ENCODE measurements at regions of chr13 and their contacts with region 1.

Region 1: DNA sequence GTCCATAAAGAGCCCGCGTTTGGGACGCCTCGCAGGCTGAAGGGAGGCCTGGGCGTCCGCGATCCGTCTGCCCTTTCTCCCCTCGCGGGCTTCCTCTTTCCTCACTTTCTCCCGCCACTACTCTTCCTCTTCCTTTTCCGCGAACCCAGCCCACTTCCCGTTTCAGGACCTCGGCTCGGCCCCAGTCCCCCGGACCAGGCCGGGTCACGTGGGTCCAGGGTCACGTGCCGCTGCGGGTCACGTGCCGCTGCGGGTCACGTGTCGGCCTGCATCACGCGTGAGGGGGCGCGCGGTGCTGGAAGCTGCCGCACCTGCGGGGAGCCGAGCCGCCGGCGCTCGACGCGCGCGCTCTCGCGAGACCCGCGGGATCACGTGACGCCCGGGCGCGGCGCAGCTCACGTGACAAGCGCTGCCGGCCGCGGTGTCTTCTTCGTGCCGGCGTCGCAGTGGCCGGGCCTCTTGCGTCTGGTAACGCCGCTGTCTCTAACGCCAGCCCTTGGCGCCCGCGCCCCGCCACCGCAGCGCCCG is at the start of gene LAMP1:
- DNase-seq: peak; percentile 94
- H3K4me3 ChIP-seq: peak within 1 kb of the TSS; percentile 83 to 91 (median 91)
- H3K27ac ChIP-seq: peak within 1 kb of the TSS; percentile 78
- H3K4me1 ChIP-seq: peaks cover 3% of the 10 kb centered on the region
- H3K27me3 ChIP-seq: no peaks in the 10 kb centered on the region
- CTCF ChIP-seq: no peak
- total RNA-seq, gene LAMP1: 242 to 252 TPM

Region 2: GRCh38 chr13:112917056-112917664 is 379.7 kb before region 1 on chr13:
- CTCF ChIA-PET with region 1: no interaction called
- dilution Hi-C with region 1: no loop called
- in situ Hi-C with region 1: no loop called
- intact Hi-C with region 1: no loop called
- DNase-seq: no peak
- H3K4me3 ChIP-seq: no peak overlapping the region
- H3K27ac ChIP-seq: no peak overlapping the region
- H3K4me1 ChIP-seq: no peaks in the 10 kb centered on the region
- H3K27me3 ChIP-seq: peaks cover 1% of the 10 kb centered on the region
- CTCF ChIP-seq: no peak

Region 3: DNA sequence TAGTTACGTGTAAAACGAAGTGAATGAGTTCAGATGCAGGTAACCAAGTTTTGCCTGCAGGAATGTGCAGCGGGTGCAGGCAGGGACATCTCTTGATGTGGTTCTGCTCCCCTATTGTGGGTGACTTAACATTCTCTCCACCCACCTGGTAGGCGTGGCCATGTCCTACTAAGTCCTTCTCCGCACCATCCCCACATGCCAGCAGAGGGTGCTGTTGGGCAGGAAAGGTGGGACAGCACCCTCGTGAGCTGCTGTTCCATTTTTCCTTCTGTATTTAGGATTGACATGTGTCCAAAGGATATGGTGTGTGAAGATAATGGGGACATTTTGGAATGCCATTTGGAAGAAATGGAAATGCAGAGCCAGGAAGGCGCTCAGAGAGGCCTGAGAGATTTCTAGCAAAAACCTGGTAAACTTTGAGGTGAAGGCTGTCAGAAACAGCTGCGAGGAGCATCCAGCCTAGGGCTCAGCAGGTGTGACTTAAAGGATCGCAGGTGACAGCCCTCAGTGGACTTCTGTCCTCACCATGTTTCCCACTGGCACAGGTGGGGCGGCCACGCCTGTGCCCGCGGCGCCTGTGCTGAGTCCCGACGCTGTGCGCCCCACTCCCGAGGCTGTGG is 354.1 kb before region 1 on chr13:
- CTCF ChIA-PET with region 1: no interaction called
- dilution Hi-C with region 1: no loop called
- in situ Hi-C with region 1: no loop called
- intact Hi-C with region 1: loop called (anchors 2 kb)
- DNase-seq: peak; percentile 84
- H3K4me3 ChIP-seq: peak overlapping the region; percentile 43 to 52 (median 49)
- H3K27ac ChIP-seq: no peak overlapping the region
- H3K4me1 ChIP-seq: peaks cover 20% of the 10 kb centered on the region
- H3K27me3 ChIP-seq: peaks cover 4% of the 10 kb centered on the region
- CTCF ChIP-seq: peak; percentile 97 to 99

Region 4: GRCh38 chr13:113208424-113209335 is 88.2 kb before region 1 on chr13 and contains the start of gene PCID2:
- CTCF ChIA-PET with region 1: no interaction called
- dilution Hi-C with region 1: no loop called
- in situ Hi-C with region 1: no loop called
- intact Hi-C with region 1: loop called (anchors 5 kb)
- DNase-seq: peak; percentile 88
- H3K4me3 ChIP-seq: peak within 1 kb of the TSS; percentile 74 to 93 (median 87)
- H3K27ac ChIP-seq: peak within 1 kb of the TSS; percentile 94
- H3K4me1 ChIP-seq: peaks cover 16% of the 10 kb centered on the region
- H3K27me3 ChIP-seq: no peaks in the 10 kb centered on the region
- CTCF ChIP-seq: peak in 1 of 2 donors; percentile 9
- total RNA-seq, gene PCID2: 34.7 to 42.0 TPM

Region 5: GRCh38 chr13:113327766-113328471 is 31.0 kb after region 1 on chr13:
- CTCF ChIA-PET with region 1: no interaction called
- dilution Hi-C with region 1: loop called (anchors 5 kb)
- in situ Hi-C with region 1: no loop called
- intact Hi-C with region 1: no loop called
- DNase-seq: no peak
- H3K4me3 ChIP-seq: no peak overlapping the region
- H3K27ac ChIP-seq: no peak overlapping the region
- H3K4me1 ChIP-seq: no peaks in the 10 kb centered on the region
- H3K27me3 ChIP-seq: no peaks in the 10 kb centered on the region
- CTCF ChIP-seq: no peak

Region 6: GRCh38 chr13:113393563-113394338 is 96.8 kb after region 1 on chr13:
- CTCF ChIA-PET with region 1: no interaction called
- dilution Hi-C with region 1: loop called (anchors 5 kb)
- in situ Hi-C with region 1: no loop called
- intact Hi-C with region 1: no loop called
- DNase-seq: peak; percentile 54
- H3K4me3 ChIP-seq: peak overlapping the region; percentile 39 to 58 (median 57)
- H3K27ac ChIP-seq: no peak overlapping the region
- H3K4me1 ChIP-seq: peaks cover 12% of the 10 kb centered on the region
- H3K27me3 ChIP-seq: peaks cover under 1% of the 10 kb centered on the region
- CTCF ChIP-seq: peak; percentile 45 to 62